ENCODE measurements at regions of chr9 and their contacts with region 1.

Region 1: GRCh38 chr9:88534456-88535261 is at the start of gene NXNL2:
- DNase-seq: peak; percentile 85
- H3K4me3 Mint-ChIP-seq: peak within 1 kb of the TSS; percentile 69
- H3K27ac Mint-ChIP-seq: peak within 1 kb of the TSS; percentile 24
- H3K4me1 Mint-ChIP-seq: peaks cover 25% of the 10 kb centered on the region
- H3K27me3 Mint-ChIP-seq: no peaks in the 10 kb centered on the region
- CTCF ChIP-seq: no peak
- total RNA-seq, gene NXNL2: 0.49 and 0.66 TPM in 2 replicates

Region 2: DNA sequence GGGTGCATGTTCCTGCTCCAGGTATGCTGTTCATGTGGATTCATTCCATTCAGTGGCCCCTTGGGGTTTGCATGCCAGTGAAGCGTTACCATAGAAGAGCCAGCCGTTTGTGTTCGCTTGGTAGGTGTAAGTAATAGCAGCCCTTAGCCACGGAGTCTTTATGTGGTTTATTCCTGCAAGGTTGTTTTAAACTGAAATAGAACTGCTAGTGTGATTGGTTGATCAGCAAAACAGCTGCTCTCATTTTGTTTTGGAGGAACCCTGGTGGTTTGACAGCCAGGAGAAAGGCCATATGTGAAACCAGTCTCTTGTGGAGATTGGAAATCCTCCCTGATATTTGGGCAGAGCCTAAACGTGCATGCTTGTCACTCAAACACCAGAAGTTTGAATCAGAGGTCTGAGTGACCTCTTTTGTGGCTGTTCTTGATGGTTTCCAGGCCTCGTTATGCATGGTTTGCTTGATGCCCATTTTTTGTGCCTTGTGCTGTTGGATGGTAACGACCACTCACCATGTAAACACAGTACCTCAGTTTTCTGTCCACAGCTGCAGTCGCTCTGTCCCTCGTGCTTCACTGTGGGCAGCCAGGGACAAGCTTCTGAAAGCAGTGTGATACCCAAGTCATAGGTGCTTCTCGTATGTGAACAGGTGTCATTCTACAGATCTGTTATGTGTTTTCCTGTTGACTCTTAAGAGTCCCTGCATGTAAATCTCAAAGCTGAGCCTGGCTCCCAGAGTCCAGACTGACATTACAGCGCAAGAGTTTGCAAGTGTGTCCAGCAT is 58.0 kb before region 1 on chr9:
- CTCF ChIA-PET with region 1: no interaction called
- POLR2A ChIA-PET with region 1: no interaction called
- intact Hi-C with region 1: loop called (anchors 10 kb)
- DNase-seq: no peak
- H3K4me3 Mint-ChIP-seq: no peak overlapping the region
- H3K27ac Mint-ChIP-seq: no peak overlapping the region
- H3K4me1 Mint-ChIP-seq: peaks cover 16% of the 10 kb centered on the region
- H3K27me3 Mint-ChIP-seq: no peaks in the 10 kb centered on the region
- CTCF ChIP-seq: no peak